ENCODE measurements at regions of chr18 and their contacts with region 1.

Region 1: GRCh38 chr18:33128581-33128980 is 311.9 kb downstream of the CCDC178 start:
- DNase-seq: no peak
- ATAC-seq: no peak
- H3K4me3 ChIP-seq: no peak overlapping the region
- H3K27ac ChIP-seq: no peak overlapping the region
- H3K4me1 ChIP-seq: no peaks in the 10 kb centered on the region
- H3K27me3 ChIP-seq: no peaks in the 10 kb centered on the region
- CTCF ChIP-seq: no peak

Region 2: DNA sequence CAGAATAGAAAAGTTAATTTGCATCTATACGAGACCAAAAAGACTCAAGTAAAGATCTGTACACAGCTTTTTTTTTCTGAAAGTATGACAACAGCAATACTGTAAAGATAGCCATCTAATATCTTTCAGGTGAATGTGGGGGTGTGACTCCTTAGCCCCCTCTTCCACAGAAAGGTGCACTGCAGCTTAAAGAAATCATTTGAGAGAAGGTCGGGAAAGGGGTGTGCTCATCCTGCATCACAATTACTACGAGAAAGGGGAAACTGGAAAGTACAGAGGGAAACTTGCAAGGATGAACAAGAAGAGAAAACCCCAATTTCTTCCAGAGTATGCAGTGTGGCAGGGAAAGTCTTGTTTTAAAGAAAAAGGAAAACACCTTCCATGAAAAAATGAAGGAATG is 56.4 kb after region 1 on chr18:
- intact Hi-C with region 1: loop called (anchors 10 kb)
- DNase-seq: no peak
- ATAC-seq: no peak
- H3K4me3 ChIP-seq: no peak overlapping the region
- H3K27ac ChIP-seq: no peak overlapping the region
- H3K4me1 ChIP-seq: no peaks in the 10 kb centered on the region
- H3K27me3 ChIP-seq: no peaks in the 10 kb centered on the region
- CTCF ChIP-seq: no peak

Measured in lower lobe of right lung (tissue), 2 donors.